PC-3 (cell line): ENCODE measurements at regions of chr1 and their contacts with region 1.

Region 1: GRCh38 chr1:153922972-153923925 is at the start of gene GATAD2B:
- DNase-seq: peak; percentile 100
- ATAC-seq: peak; percentile 92
- H3K4me3 ChIP-seq: peak within 1 kb of the TSS; percentile 97
- H3K27ac ChIP-seq: peak within 1 kb of the TSS; percentile 58
- H3K4me1 ChIP-seq: peaks cover 30% of the 10 kb centered on the region
- H3K27me3 ChIP-seq: no peaks in the 10 kb centered on the region
- CTCF ChIP-seq: no peak
- total RNA-seq, gene GATAD2B: 7.2 and 11.7 TPM in 2 replicates

Region 2: GRCh38 chr1:153796791-153797659 is 126.2 kb before region 1 on chr1:
- CTCF ChIA-PET with region 1: no interaction called
- POLR2A ChIA-PET with region 1: no interaction called
- intact Hi-C with region 1: loop called (anchors 5 kb)
- DNase-seq: peak; percentile 92
- ATAC-seq: peak; percentile 84
- H3K4me3 ChIP-seq: no peak overlapping the region
- H3K27ac ChIP-seq: no peak overlapping the region
- H3K4me1 ChIP-seq: no peaks in the 10 kb centered on the region
- H3K27me3 ChIP-seq: no peaks in the 10 kb centered on the region
- CTCF ChIP-seq: peak; percentile 88

Region 3: DNA sequence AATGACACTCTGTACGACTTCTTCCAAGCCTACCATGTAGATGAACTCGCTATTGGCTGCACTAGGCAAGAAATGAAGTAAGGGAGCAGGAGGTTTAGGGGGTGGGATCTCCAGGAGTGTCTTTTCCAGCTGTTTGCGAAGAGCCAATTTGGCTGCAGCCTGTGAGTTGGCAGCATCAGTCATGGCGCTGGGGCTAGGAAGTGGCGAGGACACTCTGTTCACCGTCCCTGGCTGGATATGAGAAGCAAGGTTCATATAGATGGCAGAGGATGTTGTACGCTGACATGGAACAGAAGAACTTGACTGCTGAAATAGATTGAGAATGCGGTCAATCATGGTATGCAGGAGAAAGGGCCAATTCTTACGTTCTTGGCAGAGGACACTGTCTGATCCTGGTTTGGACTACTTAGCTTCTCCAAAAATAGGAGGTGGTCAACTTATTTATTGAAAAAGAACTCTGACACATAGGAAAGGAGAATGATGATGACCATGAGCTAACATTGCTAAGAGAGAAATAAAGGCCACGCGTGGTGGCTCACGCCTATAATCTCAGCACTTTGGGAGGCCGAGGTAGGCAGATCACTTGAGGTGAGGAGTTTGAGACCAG is 106.9 kb before region 1 on chr1:
- CTCF ChIA-PET with region 1: no interaction called
- POLR2A ChIA-PET with region 1: no interaction called
- intact Hi-C with region 1: loop called (anchors 1 kb)
- DNase-seq: no peak
- ATAC-seq: no peak
- H3K4me3 ChIP-seq: no peak overlapping the region
- H3K27ac ChIP-seq: no peak overlapping the region
- H3K4me1 ChIP-seq: no peaks in the 10 kb centered on the region
- H3K27me3 ChIP-seq: no peaks in the 10 kb centered on the region
- CTCF ChIP-seq: no peak

Region 4: GRCh38 chr1:153880962-153881361 is 42.3 kb before region 1 on chr1:
- CTCF ChIA-PET with region 1: no interaction called
- POLR2A ChIA-PET with region 1: interaction called, 7 read pairs
- intact Hi-C with region 1: loop called (anchors 5 kb)
- DNase-seq: peak; percentile 69
- ATAC-seq: peak; percentile 92
- H3K4me3 ChIP-seq: no peak overlapping the region
- H3K27ac ChIP-seq: no peak overlapping the region
- H3K4me1 ChIP-seq: no peaks in the 10 kb centered on the region
- H3K27me3 ChIP-seq: no peaks in the 10 kb centered on the region
- CTCF ChIP-seq: no peak

Region 5: DNA sequence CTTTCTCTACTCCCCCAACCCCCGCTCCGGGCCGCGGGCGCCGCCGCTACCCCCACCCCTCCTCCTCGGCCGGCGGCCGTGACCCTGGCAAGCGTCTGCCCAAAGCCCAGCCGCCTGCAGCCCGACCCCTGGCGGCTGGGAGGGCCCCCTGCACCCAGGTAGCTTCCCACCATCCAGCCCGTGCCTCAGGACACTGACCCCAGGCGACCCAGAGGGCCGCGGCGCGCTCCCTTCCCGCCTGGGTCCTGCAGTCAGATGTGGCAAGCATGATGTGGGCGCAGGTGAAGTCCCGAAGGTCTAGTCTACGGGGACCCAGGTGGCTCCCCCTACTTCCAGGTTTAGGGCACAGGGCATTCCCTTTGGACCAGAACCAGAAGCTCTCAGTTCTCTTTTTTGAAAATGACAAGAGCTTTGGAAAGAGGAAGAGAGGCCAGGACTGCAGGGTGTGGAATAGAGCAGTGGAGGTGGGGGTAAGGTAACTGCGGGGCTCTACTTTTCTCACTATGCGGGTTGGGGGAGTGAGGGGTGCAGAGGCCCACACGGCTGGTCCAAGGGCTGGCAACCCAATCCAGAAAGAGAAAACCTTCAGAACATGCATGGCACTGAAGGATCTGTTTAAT is 23.5 kb after region 1 on chr1 and contains the start of gene DENND4B:
- CTCF ChIA-PET with region 1: interaction called, 9 read pairs
- POLR2A ChIA-PET with region 1: interaction called, 11 read pairs
- intact Hi-C with region 1: no loop called
- DNase-seq: peak; percentile 86
- ATAC-seq: peak; percentile 88
- H3K4me3 ChIP-seq: peak within 1 kb of the TSS; percentile 81
- H3K27ac ChIP-seq: peak within 1 kb of the TSS; percentile 43
- H3K4me1 ChIP-seq: peaks cover 13% of the 10 kb centered on the region
- H3K27me3 ChIP-seq: no peaks in the 10 kb centered on the region
- CTCF ChIP-seq: peak; percentile 90
- total RNA-seq, gene DENND4B: 27.3 and 38.0 TPM in 2 replicates

Region 6: GRCh38 chr1:153967082-153968000 is 44.1 kb after region 1 on chr1 and contains the start of gene CREB3L4:
- CTCF ChIA-PET with region 1: interaction called, 3 read pairs
- POLR2A ChIA-PET with region 1: interaction called, 10 read pairs
- intact Hi-C with region 1: no loop called
- DNase-seq: peak; percentile 98
- ATAC-seq: peak; percentile 68
- H3K4me3 ChIP-seq: peak within 1 kb of the TSS; percentile 71
- H3K27ac ChIP-seq: peak within 1 kb of the TSS; percentile 81
- H3K4me1 ChIP-seq: peaks cover 31% of the 10 kb centered on the region
- H3K27me3 ChIP-seq: no peaks in the 10 kb centered on the region
- CTCF ChIP-seq: peak; percentile 55
- total RNA-seq, gene CREB3L4: 22.9 and 28.7 TPM in 2 replicates